ENCODE measurements at regions of chr2 and their contacts with region 1.

Region 1: DNA sequence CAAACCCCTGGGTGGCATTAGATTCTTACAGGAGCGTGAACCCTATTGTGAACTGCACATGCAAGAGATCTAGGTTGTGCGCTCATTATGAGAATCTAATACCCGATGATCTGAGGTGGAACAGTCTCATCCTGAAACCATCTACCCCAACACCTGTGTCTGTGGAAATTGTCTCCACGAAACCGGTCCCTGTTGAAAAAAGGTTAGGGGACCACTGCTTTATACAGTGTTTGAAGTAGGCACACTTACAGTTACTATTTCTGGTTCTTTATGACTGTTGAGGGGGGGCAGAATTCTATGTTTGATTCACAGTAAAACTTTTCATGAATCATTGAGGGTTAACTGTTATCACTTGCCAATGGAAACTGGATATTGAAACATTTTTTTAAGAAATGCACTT is 72.0 kb downstream of the RIF1 start:
- DNase-seq: no peak
- H3K4me3 ChIP-seq: no peak overlapping the region
- H3K27ac ChIP-seq: no peak overlapping the region
- H3K4me1 ChIP-seq: no peaks in the 10 kb centered on the region
- H3K27me3 ChIP-seq: no peaks in the 10 kb centered on the region
- CTCF ChIP-seq: no peak
- EP300 ChIP-seq: no peak
- POLR2A ChIP-seq: no peak

Region 2: DNA sequence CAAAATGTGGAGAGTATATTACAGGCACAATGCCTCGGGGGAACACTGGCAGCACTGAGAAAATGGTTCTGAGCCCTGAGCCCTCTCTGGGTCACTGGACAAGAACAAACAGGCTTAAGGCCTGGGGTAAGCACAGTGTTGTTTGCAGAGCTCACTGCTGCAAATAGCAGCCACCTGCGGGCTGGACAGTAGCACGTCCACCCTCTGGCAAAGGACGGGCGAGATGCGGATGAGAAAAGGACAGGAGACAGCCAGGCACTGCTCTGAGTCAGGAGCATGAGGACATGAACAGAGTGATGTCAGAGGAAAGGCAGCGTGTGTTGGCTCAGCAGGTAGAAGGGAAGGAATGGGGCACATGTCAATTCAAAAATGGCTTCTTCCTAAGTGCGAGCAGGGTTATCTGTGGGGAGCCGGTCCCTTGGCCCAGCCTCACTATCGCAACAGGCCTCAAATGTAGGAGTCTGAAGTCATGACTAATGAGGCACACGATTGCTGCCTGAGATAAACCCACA is 278.5 kb after region 1 on chr2:
- intact Hi-C with region 1: loop called in 1 of 4 experiments (anchors 5 kb)
- DNase-seq: no peak
- H3K4me3 ChIP-seq: no peak overlapping the region
- H3K27ac ChIP-seq: no peak overlapping the region
- H3K4me1 ChIP-seq: no peaks in the 10 kb centered on the region
- H3K27me3 ChIP-seq: no peaks in the 10 kb centered on the region
- CTCF ChIP-seq: no peak
- EP300 ChIP-seq: no peak
- POLR2A ChIP-seq: no peak

Measured in ovary (tissue), 10 donors.